ENCODE measurements at regions of chr1 and their contacts with region 1.

Region 1: GRCh38 chr1:193059268-193060225 is at the starts of genes RO60 and UCHL5:
- DNase-seq: peak; percentile 98
- H3K4me3 ChIP-seq: peak within 1 kb of the TSS; percentile 91 to 96
- H3K27ac ChIP-seq: peak within 1 kb of the TSS; percentile 95 to 97
- H3K4me1 ChIP-seq: peaks cover 21% of the 10 kb centered on the region
- H3K27me3 ChIP-seq: no peaks in the 10 kb centered on the region
- CTCF ChIP-seq: peak in 1 of 3 experiments; percentile 6
- POLR2A ChIP-seq: peak; percentile 58
- total RNA-seq, gene RO60: 95.8 to 96.3 TPM
- total RNA-seq, gene UCHL5: 38.5 to 55.5 TPM

Region 2: GRCh38 chr1:193013005-193013404 is 46.5 kb before region 1 on chr1:
- intact Hi-C with region 1: no loop called
- DNase-seq: no peak
- H3K4me3 ChIP-seq: no peak overlapping the region
- H3K27ac ChIP-seq: no peak overlapping the region
- H3K4me1 ChIP-seq: no peaks in the 10 kb centered on the region
- H3K27me3 ChIP-seq: no peaks in the 10 kb centered on the region
- CTCF ChIP-seq: no peak
- POLR2A ChIP-seq: no peak

Region 3: DNA sequence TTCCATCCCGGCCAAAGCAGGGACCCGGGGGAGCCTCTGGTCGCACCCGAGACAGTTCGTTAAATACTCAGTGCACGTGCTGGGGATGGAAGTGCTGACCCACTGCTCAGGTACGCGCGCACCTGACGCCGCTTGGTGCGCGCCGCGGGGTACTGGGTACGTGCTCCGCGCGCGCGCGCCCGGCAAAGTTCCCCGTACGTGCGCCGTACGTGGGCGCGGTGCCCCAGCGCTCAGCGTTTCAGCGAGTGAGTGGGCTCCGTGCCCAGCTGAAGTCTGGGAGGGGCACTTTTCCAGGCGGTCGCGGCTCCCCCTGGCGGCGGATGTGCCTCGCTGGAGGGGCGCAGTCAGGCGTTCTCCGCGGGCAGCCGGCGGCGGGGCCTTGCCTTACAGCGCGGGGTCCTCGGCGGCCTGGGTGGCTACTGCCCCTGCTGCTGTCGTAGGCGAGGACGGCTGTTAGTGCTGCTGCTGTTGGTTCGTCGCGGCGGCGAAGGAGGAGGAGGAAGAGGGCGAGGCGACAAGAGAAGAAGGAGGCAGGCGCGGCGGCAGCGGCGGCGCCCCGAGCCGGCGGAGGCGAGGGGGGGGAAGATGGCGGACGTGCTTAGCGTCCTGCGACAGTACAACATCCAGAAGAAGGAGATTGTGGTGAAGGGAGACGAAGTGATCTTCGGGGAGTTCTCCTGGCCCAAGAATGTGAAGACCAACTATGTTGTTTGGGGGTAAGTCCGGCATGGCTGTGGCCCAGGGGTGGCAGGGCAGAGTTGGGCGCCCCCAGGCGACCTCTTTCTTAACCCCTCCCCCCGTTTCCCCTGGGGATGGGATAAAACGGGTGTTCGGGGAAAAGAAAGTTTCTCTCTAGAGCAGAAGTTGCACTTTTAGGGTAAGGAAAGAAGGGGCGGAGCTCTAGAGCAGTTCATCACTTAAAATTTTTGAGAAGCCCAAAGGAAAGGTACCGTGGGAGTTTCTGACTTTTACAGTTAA is 62.4 kb after region 1 on chr1 and contains the start of gene CDC73:
- intact Hi-C with region 1: loop called (anchors 1 kb)
- DNase-seq: peak; percentile 96
- H3K4me3 ChIP-seq: peak within 1 kb of the TSS; percentile 85 to 89
- H3K27ac ChIP-seq: peak within 1 kb of the TSS; percentile 95 to 98
- H3K4me1 ChIP-seq: peaks cover 6% of the 10 kb centered on the region
- H3K27me3 ChIP-seq: no peaks in the 10 kb centered on the region
- CTCF ChIP-seq: peak; percentile 95 to 97 (median 96)
- POLR2A ChIP-seq: peak; percentile 71
- total RNA-seq, gene CDC73: 39.6 to 47.1 TPM